GM12878 (cell line): ENCODE measurements at regions of chr6 and their contacts with region 1.

Region 1: GRCh38 chr6:92122746-92123145 is 1296.6 kb downstream of the EPHA7 start:
- DNase-seq: no peak
- ATAC-seq: peak; percentile 59; the same call in 2 of the 3 replicates
- H3K4me3 ChIP-seq: no peak overlapping the region
- H3K27ac ChIP-seq: no peak overlapping the region
- H3K4me1 ChIP-seq: no peaks in the 10 kb centered on the region
- H3K27me3 ChIP-seq: no peaks in the 10 kb centered on the region
- CTCF ChIP-seq: peak in 2 of 3 experiments; percentile 13 to 29; a peak in 3 of 6 replicates
- EP300 ChIP-seq: no peak
- POLR2A ChIP-seq: no peak
- RAD21 ChIP-seq: peak; percentile 34; the same call in 1 of the 2 replicates

Region 2: GRCh38 chr6:92110403-92110802 is 12.3 kb before region 1 on chr6:
- CTCF ChIA-PET with region 1: interaction called, 13 read pairs
- POLR2A ChIA-PET with region 1: interaction called, 5 read pairs
- RAD21 ChIA-PET with region 1: interaction called, 12 read pairs
- SMC1A ChIA-PET with region 1: interaction called, 12 read pairs
- in situ Hi-C with region 1: no loop called
- intact Hi-C with region 1: no loop called
- DNase-seq: no peak
- ATAC-seq: peak; percentile 82
- H3K4me3 ChIP-seq: no peak overlapping the region
- H3K27ac ChIP-seq: no peak overlapping the region
- H3K4me1 ChIP-seq: no peaks in the 10 kb centered on the region
- H3K27me3 ChIP-seq: no peaks in the 10 kb centered on the region
- CTCF ChIP-seq: no peak
- EP300 ChIP-seq: no peak
- POLR2A ChIP-seq: no peak
- RAD21 ChIP-seq: no peak

Region 3: GRCh38 chr6:92635553-92636153 is 512.9 kb after region 1 on chr6:
- CTCF ChIA-PET with region 1: no interaction called
- POLR2A ChIA-PET with region 1: no interaction called
- RAD21 ChIA-PET with region 1: no interaction called
- SMC1A ChIA-PET with region 1: interaction called, 4 read pairs
- in situ Hi-C with region 1: no loop called
- intact Hi-C with region 1: loop called (anchors 10 kb)
- DNase-seq: no peak
- ATAC-seq: no peak
- H3K4me3 ChIP-seq: no peak overlapping the region
- H3K27ac ChIP-seq: no peak overlapping the region
- H3K4me1 ChIP-seq: no peaks in the 10 kb centered on the region
- H3K27me3 ChIP-seq: no peaks in the 10 kb centered on the region
- CTCF ChIP-seq: no peak
- EP300 ChIP-seq: no peak
- POLR2A ChIP-seq: no peak
- RAD21 ChIP-seq: no peak